ENCODE measurements at regions of chr5 and their contacts with region 1.

Region 1: DNA sequence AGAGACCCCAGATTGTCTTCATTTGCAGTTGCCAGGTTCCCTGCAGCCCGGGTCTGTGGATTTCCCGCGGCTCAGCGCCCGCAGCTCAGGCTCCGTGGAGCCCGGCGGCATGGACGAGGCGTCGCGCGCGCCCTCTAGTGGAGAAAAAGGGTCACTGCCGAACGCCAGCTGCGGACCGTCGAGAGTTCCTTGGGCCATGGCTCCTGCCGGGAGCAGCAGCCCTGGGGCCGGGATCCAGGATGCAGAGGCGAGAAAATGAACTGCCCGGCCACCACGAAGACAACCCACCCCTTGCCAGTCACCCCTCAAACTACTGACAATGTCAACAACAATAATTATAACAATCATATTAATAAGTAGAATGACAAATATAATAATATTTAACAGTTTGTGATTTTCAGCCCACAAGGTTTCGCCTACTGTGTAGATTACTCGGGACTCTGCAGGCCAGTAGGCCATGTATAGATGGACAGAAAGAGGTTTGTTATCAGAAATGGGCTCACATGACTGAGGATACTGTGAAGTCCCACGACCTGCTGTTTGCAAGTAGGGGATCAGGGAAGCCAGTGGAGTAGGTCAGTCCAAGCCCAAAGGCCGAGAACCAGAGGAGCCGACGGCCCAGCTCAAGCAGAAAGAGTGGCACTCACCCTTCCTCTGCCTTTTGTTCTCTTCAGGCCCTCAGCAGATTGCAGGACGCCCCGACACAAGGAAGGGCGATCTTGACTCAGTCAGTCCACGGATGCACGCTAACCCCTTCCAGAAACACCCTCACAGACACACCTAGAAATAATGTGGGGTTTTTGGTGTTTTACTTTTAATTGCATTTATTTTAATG is 43.1 kb downstream of the BOD1 start:
- DNase-seq: peak; percentile 28
- ATAC-seq: peak; percentile 96
- H3K4me3 ChIP-seq: no peak overlapping the region; a peak in 1 of 6 replicates
- H3K27ac ChIP-seq: no peak overlapping the region
- H3K4me1 ChIP-seq: no peaks in the 10 kb centered on the region
- H3K27me3 ChIP-seq: peaks cover 0 to 30% of the 10 kb centered on the region in 2 experiments; a peak in 3 of 5 replicates
- CTCF ChIP-seq: peak; percentile 94
- EP300 ChIP-seq: no peak
- POLR2A ChIP-seq: no peak
- RAD21 ChIP-seq: peak; percentile 82

Region 2: GRCh38 chr5:173293817-173294672 is 279.3 kb before region 1 on chr5:
- CTCF ChIA-PET with region 1: interaction called, 9 read pairs
- POLR2A ChIA-PET with region 1: no interaction called
- in situ Hi-C with region 1: no loop called
- intact Hi-C with region 1: loop called (anchors 1 kb)
- DNase-seq: peak; percentile 78
- ATAC-seq: peak; percentile 45
- H3K4me3 ChIP-seq: peak overlapping the region; percentile 48 to 76 (median 58)
- H3K27ac ChIP-seq: no peak overlapping the region
- H3K4me1 ChIP-seq: peaks cover 88% of the 10 kb centered on the region
- H3K27me3 ChIP-seq: no peaks in the 10 kb centered on the region; a peak in 1 of 5 replicates
- CTCF ChIP-seq: peak; percentile 95
- EP300 ChIP-seq: no peak
- POLR2A ChIP-seq: no peak
- RAD21 ChIP-seq: peak; percentile 92

Region 3: GRCh38 chr5:173396311-173396993 is 176.9 kb before region 1 on chr5:
- CTCF ChIA-PET with region 1: interaction called, 3 read pairs
- POLR2A ChIA-PET with region 1: no interaction called
- in situ Hi-C with region 1: no loop called
- intact Hi-C with region 1: loop called (anchors 5 kb)
- DNase-seq: peak; percentile 9
- ATAC-seq: peak; percentile 95
- H3K4me3 ChIP-seq: no peak overlapping the region
- H3K27ac ChIP-seq: no peak overlapping the region
- H3K4me1 ChIP-seq: no peaks in the 10 kb centered on the region
- H3K27me3 ChIP-seq: peaks cover 2 to 7% of the 10 kb centered on the region in 2 experiments; a peak in 2 of 5 replicates
- CTCF ChIP-seq: peak; percentile 52
- EP300 ChIP-seq: no peak
- POLR2A ChIP-seq: no peak
- RAD21 ChIP-seq: 0 out of 2 replicates have a peak, but pooled peaks have one; percentile 8

Region 4: DNA sequence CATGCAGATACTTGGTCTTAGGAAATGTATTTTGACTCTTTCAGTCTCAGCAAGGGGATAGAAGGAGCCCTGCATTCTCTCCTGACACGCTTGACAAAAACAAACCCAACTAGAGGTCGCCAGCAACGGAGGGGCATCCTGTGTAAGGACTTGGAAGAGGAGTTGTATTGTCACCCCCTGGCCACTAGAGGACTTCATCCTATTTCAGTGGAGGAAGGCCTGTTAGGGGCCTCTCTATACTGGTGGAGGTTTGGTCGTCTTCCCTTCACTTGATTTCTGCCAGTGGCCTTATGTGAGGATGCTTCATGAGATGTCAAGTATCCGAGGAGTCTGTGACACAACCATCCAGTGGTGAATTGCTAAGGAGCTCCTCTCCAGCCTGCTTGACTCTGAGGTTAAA is 122.3 kb before region 1 on chr5:
- CTCF ChIA-PET with region 1: interaction called, 4 read pairs
- POLR2A ChIA-PET with region 1: no interaction called
- in situ Hi-C with region 1: no loop called
- intact Hi-C with region 1: loop called (anchors 10 kb)
- DNase-seq: peak; percentile 49
- ATAC-seq: peak; percentile 85
- H3K4me3 ChIP-seq: no peak overlapping the region
- H3K27ac ChIP-seq: no peak overlapping the region
- H3K4me1 ChIP-seq: no peaks in the 10 kb centered on the region
- H3K27me3 ChIP-seq: peaks cover 0 to 2% of the 10 kb centered on the region in 2 experiments; a peak in 3 of 5 replicates
- CTCF ChIP-seq: peak; percentile 69
- EP300 ChIP-seq: no peak
- POLR2A ChIP-seq: no peak
- RAD21 ChIP-seq: no peak

Region 5: DNA sequence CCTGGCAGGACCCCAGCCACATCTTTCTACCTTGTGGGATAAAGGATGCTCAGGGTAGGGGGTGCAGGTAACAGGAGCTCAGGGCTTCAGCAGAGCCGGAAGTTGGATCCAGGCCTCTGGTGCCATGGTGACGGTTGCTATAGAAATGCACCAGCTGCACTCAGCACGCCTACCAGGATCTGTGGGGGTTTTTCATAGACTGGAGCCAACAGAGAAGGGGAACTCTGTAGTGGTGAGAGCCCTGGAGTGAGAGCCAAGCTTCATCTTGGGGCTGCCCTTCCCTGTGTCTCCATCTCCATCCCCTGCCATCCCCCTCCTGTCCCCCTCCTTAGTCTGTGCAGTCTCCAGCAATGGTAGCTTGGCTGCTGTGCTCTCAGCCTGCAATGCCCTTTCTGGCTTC is 70.6 kb after region 1 on chr5:
- CTCF ChIA-PET with region 1: no interaction called
- POLR2A ChIA-PET with region 1: no interaction called
- in situ Hi-C with region 1: no loop called
- intact Hi-C with region 1: no loop called
- DNase-seq: no peak
- ATAC-seq: peak; percentile 24; the same call in 1 of the 3 replicates
- H3K4me3 ChIP-seq: no peak overlapping the region
- H3K27ac ChIP-seq: no peak overlapping the region
- H3K4me1 ChIP-seq: peaks cover 53% of the 10 kb centered on the region
- H3K27me3 ChIP-seq: peaks cover 0 to 26% of the 10 kb centered on the region in 2 experiments; a peak in 4 of 5 replicates
- CTCF ChIP-seq: no peak
- EP300 ChIP-seq: no peak
- POLR2A ChIP-seq: no peak
- RAD21 ChIP-seq: no peak

Region 6: DNA sequence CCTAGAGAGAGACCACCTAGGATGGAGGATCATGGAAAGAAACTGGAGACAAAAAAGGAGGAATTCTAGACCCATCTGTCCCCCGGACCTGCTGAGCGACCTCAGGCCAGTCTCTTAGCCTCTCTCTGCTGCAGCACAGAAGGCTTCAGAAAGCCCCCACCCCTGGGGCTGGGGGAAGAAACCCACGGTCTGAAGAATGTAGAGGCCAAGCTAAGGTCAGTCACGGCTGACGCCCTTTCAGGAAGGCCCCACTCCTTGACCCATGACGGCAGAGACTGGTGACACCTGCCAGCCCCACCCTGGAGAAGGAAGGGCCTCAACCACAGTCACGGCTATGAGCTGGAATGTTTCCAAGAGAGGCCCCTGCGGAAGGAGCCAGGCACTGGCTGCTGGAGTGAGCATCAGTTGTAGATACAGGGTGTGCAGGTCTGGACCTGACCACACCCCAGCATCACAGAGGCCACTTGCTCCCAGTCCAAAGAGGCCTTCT is 163.6 kb after region 1 on chr5:
- CTCF ChIA-PET with region 1: no interaction called
- POLR2A ChIA-PET with region 1: no interaction called
- in situ Hi-C with region 1: no loop called
- intact Hi-C with region 1: no loop called
- DNase-seq: peak; percentile 32
- ATAC-seq: peak; percentile 67
- H3K4me3 ChIP-seq: peak overlapping the region in 1 of 3 experiments; percentile 43; a peak in 2 of 6 replicates
- H3K27ac ChIP-seq: no peak overlapping the region
- H3K4me1 ChIP-seq: peaks cover 42% of the 10 kb centered on the region
- H3K27me3 ChIP-seq: no peaks in the 10 kb centered on the region
- CTCF ChIP-seq: no peak
- EP300 ChIP-seq: no peak
- POLR2A ChIP-seq: no peak
- RAD21 ChIP-seq: no peak

Region 7: DNA sequence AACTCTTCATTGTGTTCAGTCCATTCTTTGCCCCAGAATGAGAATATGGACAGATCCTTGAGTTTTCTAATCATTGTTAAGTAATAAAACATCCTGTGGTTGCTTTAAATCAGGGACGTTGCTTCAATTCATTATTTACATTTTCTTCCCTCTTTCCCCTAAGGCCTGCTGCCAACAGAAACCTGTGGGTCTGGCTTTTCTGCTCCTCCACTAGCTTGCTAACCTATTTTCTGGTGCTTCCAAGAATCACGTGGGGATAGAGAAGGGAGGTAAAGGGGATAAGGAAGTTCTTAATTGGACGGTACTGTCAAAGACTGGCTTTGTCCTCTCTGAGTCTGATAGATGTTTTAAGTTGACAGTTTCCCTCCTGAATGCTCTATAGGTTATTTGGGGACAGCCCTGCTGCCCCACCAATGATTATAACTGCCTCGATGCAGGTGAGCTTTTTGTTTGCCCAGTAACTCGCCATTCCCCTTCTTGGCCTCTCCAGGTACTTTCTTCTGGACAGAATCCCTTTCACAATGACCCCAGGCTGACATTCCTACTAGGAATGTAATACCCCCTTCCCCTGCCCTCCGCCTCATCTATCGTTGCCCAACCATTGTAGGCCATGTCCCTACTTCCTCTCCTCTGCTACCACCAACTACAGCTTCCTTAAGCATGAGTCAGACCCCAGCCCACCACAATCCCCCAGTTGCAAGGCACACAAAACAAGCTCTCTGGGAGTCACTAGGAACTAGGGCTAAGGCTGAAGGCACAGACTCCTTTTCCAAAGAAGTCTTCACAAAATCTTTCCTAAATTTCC is 294.9 kb after region 1 on chr5:
- CTCF ChIA-PET with region 1: no interaction called
- POLR2A ChIA-PET with region 1: no interaction called
- in situ Hi-C with region 1: no loop called
- intact Hi-C with region 1: no loop called
- DNase-seq: peak; percentile 43
- ATAC-seq: no peak
- H3K4me3 ChIP-seq: no peak overlapping the region
- H3K27ac ChIP-seq: no peak overlapping the region
- H3K4me1 ChIP-seq: peaks cover 66% of the 10 kb centered on the region
- H3K27me3 ChIP-seq: no peaks in the 10 kb centered on the region
- CTCF ChIP-seq: no peak
- EP300 ChIP-seq: no peak
- POLR2A ChIP-seq: no peak
- RAD21 ChIP-seq: no peak

Region 8: DNA sequence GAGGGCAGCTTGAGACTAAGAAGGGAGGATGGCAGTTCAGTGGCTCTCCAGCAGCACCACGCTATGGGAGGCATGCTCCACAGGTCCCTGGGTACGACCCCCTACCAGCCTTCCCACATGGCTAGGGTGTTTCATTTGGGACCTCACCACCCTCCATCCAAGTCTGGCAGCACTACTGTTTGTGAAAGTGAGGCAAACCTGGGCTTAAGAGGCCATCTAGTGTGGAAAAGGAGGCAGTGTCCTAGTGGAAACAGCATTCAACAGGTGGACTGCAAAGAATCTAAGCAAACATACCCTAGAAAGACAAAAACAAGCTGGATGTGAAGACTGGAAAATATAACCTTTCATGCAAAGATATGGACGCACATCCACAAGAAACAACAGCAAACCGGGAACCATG is 410.9 kb after region 1 on chr5:
- CTCF ChIA-PET with region 1: no interaction called
- POLR2A ChIA-PET with region 1: no interaction called
- in situ Hi-C with region 1: no loop called
- intact Hi-C with region 1: loop called (anchors 5 kb)
- DNase-seq: peak; percentile 57
- ATAC-seq: peak; percentile 92
- H3K4me3 ChIP-seq: no peak overlapping the region
- H3K27ac ChIP-seq: no peak overlapping the region
- H3K4me1 ChIP-seq: no peaks in the 10 kb centered on the region
- H3K27me3 ChIP-seq: no peaks in the 10 kb centered on the region
- CTCF ChIP-seq: peak; percentile 94
- EP300 ChIP-seq: no peak
- POLR2A ChIP-seq: no peak
- RAD21 ChIP-seq: peak; percentile 84

Measured in HepG2 (cell line).